CD4-positive, alpha-beta T cell (primary cell): ENCODE measurements at regions of chr10 and their contacts with region 1.

Region 1: GRCh38 chr10:35447693-35448407 is 111.5 kb downstream of the CCNY start:
- DNase-seq: peak in 11 of 14 experiments; percentile 12 to 75 (median 25)
- ATAC-seq: peak; percentile 77
- H3K4me3 ChIP-seq: peak overlapping the region; percentile 15
- H3K4me3 Mint-ChIP-seq: peak overlapping the region; percentile 52
- H3K27ac ChIP-seq: peak overlapping the region; percentile 64 to 81
- H3K27ac Mint-ChIP-seq: peak overlapping the region; percentile 93
- H3K4me1 ChIP-seq: peaks cover 58% of the 10 kb centered on the region
- H3K4me1 Mint-ChIP-seq: peaks cover 80% of the 10 kb centered on the region
- H3K27me3 ChIP-seq: no peaks in the 10 kb centered on the region
- H3K27me3 Mint-ChIP-seq: no peaks in the 10 kb centered on the region
- CTCF ChIP-seq: no peak

Region 2: DNA sequence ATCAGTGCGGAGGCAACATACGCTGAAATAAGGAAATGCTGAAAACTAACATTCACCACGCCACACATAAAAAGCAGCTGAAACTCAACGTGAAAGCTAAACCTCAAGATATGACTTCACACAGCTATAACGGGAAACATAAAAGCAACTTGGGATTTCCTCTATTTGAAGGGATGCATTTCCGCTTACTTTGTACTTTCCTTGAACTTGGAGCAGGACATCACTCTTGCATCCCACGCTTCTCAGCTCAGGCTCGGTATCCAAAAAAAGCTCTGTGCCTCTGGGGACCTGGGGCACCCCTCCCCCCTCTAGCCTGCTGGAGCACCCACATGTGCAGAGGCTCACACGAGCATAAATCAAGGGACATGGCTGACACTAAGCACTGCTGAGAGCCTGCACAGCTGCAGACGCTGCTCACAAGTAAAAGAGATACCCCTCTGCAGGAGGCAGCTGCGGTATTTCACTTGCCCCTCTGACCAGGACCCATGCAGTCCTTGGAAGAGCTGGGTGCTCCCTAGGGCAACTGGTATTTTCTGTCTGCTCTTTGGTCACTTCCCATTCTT is 667.0 kb before region 1 on chr10:
- CTCF ChIA-PET with region 1: no interaction called
- POLR2A ChIA-PET with region 1: no interaction called
- intact Hi-C with region 1: no loop called
- DNase-seq: no peak
- ATAC-seq: no peak
- H3K4me3 ChIP-seq: no peak overlapping the region
- H3K4me3 Mint-ChIP-seq: peak overlapping the region; percentile 43
- H3K27ac ChIP-seq: no peak overlapping the region
- H3K27ac Mint-ChIP-seq: no peak overlapping the region
- H3K4me1 ChIP-seq: no peaks in the 10 kb centered on the region
- H3K4me1 Mint-ChIP-seq: peaks cover 8% of the 10 kb centered on the region
- H3K27me3 ChIP-seq: no peaks in the 10 kb centered on the region
- H3K27me3 Mint-ChIP-seq: peaks cover 12% of the 10 kb centered on the region
- CTCF ChIP-seq: no peak

Region 3: DNA sequence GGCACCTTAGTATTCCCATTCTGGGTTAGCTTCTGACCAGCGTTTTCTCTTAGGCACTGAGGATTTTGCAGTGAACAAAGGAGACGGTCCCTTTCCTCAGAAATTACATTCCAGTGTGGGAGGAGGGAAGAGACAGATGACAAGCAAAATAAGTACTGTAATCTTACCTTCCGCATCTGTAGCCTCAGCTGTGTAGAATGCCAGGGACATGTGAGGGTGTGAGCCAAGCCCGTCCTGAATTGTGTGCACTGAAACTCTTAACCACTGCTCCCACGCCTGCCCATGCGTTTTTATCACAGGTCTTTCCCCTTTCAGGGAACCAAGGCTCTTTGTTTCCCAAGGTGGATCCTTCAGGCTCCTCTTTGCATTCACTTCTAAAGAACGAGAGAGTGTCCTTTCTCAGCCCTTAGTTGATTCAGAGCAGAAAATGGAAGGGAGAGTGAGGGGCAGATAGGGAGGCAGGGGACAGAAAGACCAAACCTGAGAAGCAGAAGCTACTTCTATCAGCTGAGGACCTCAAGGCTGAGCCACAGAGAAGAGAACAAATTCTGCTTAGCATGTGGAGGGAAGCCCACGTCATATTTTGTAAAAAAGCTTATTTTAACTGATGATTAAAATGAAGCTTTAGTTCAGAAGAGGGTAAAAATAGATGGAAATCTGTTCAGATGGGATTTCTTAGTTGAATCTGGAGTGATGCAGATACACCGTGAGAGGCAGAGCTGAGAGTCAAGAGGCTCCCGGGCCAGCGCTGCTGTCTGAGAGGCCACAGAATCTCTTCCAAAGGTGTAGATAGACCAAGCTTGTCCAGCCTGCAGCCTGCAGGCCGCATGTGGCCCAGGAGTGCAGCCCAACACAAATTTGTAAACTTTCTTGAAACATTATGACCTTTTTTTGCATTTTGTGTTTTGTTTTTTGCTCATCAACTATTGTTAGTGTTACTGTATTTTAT is 10.9 kb after region 1 on chr10:
- CTCF ChIA-PET with region 1: interaction called, 3 read pairs
- POLR2A ChIA-PET with region 1: interaction called, 10 read pairs
- intact Hi-C with region 1: no loop called
- DNase-seq: no peak
- ATAC-seq: no peak
- H3K4me3 ChIP-seq: no peak overlapping the region
- H3K4me3 Mint-ChIP-seq: peak overlapping the region; percentile 62
- H3K27ac ChIP-seq: no peak overlapping the region
- H3K27ac Mint-ChIP-seq: peak overlapping the region; percentile 22
- H3K4me1 ChIP-seq: peaks cover 72% of the 10 kb centered on the region
- H3K4me1 Mint-ChIP-seq: peaks cover 33% of the 10 kb centered on the region
- H3K27me3 ChIP-seq: no peaks in the 10 kb centered on the region
- H3K27me3 Mint-ChIP-seq: no peaks in the 10 kb centered on the region
- CTCF ChIP-seq: no peak

Region 4: DNA sequence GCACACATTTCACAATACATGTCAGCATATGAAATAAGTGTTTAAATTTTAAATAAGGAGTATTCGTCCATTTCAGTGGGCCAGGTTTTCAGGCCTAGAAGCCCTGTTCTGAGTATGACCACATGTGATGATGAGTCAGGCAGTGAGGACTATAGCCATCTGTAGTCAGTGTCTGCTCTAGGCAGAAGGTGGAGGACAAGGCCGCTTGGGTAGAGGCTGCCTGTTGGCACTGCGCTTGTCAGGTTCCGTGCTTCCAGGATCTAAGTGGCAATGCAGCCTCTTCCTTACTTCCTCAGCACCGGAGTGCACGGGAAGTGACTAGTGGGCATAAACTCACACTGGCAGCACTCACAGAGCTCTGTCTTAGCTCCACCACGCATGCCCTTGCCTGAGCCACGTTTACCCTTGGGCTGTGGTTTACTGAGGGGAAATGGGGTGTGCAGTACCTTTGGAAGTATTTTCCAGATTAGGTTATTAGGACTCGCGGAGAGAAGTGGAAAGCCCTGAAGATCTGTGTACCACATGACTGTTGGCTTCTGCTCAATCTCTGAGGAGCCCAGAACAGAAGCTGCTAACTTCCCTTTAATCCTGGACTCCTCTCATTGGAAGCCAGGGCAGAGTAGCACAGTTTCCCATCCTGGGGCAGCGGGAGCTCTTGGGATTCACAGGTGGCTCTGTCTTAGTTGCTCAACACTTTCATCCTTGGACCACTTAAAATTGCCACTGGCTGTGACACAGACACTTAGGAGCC is 69.8 kb after region 1 on chr10:
- CTCF ChIA-PET with region 1: no interaction called
- POLR2A ChIA-PET with region 1: no interaction called
- intact Hi-C with region 1: no loop called
- DNase-seq: peak in 2 of 14 experiments; percentile 10 to 35
- ATAC-seq: no peak
- H3K4me3 ChIP-seq: no peak overlapping the region
- H3K4me3 Mint-ChIP-seq: no peak overlapping the region
- H3K27ac ChIP-seq: no peak overlapping the region
- H3K27ac Mint-ChIP-seq: no peak overlapping the region
- H3K4me1 ChIP-seq: peaks cover 3% of the 10 kb centered on the region
- H3K4me1 Mint-ChIP-seq: peaks cover 41% of the 10 kb centered on the region
- H3K27me3 ChIP-seq: no peaks in the 10 kb centered on the region
- H3K27me3 Mint-ChIP-seq: no peaks in the 10 kb centered on the region
- CTCF ChIP-seq: no peak

Region 5: GRCh38 chr10:36489611-36490228 is 1041.9 kb after region 1 on chr10:
- CTCF ChIA-PET with region 1: no interaction called
- POLR2A ChIA-PET with region 1: no interaction called
- intact Hi-C with region 1: no loop called
- DNase-seq: no peak
- ATAC-seq: no peak
- H3K4me3 ChIP-seq: no peak overlapping the region
- H3K4me3 Mint-ChIP-seq: no peak overlapping the region
- H3K27ac ChIP-seq: no peak overlapping the region
- H3K27ac Mint-ChIP-seq: no peak overlapping the region
- H3K4me1 ChIP-seq: no peaks in the 10 kb centered on the region
- H3K4me1 Mint-ChIP-seq: no peaks in the 10 kb centered on the region
- H3K27me3 ChIP-seq: no peaks in the 10 kb centered on the region
- H3K27me3 Mint-ChIP-seq: no peaks in the 10 kb centered on the region
- CTCF ChIP-seq: no peak